ENCODE measurements at regions of chr14 and their contacts with region 1.

Region 1: DNA sequence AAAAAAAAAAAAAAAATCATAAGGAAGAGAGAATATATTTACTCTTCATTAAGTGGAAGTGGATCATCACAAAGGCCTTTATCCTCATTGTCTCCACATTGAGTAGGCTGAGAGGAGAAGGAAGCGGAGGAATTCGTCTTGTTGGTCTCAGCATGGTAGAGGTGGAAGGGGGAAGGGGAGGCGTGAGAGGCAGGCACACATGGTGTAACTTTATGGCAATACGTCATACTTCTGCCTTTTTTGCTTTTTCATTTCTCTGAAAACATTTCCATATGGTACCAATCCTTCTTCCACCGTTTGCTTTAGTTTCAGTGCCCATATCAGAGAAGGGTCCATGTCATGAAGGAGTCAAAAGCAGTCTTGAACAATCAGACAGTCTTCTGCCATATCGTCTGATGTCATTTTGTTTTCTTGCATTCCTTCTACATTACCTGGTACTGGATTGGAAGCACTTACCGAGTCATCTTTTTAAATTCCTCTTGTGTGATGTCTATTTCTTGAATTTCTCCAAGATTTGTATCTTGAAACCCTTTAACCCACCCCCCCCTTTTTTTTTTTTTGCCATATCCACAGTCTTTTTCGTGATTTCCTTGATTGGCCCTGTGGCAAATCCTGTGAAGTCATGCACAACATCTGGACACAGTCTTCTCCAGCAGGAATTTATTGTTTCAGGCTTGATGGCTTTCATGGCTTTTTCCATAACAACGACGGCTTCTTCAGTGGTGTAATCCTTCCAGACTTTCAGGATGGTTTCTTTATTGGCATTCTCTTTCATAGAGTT is 8.9 kb downstream of the FUT8 start:
- DNase-seq: peak; percentile 89
- H3K4me3 ChIP-seq: peak overlapping the region; percentile 58
- H3K27ac ChIP-seq: peak overlapping the region; percentile 90
- H3K4me1 ChIP-seq: peaks cover 19% of the 10 kb centered on the region
- H3K27me3 ChIP-seq: no peaks in the 10 kb centered on the region

Region 2: DNA sequence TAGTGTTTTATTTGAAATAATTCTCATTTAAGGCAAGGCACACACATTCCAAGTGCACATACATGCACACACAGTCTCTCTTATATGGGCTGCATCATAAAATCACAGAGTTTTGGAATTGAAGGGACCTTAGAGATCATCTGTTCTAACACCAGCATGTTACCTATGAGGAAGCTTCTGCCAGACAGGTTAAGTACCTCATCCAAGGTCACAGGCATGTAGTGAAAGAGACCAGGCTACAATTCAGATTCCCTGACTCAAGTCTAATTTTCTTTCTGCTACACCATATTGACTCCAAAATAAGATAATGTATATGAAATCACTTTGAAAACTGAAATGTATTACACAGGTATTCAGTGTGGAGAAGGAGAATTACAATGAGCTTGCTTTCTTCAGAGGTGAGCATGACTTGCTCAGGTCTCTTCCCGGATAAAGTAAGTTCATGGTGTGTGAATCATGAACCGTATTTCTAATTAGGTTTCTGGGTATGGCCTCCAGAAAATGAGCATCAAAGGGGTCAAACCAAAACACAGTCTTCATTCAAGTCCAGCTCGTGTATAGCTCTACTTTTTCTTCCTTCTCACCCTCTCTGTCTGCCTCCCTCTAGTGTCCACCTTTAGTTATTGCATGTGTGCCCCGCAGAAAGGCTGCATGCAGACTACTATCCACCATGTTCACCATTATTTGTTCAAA is 403.0 kb after region 1 on chr14:
- in situ Hi-C with region 1: loop called (anchors 10 kb)
- DNase-seq: peak; percentile 71
- H3K4me3 ChIP-seq: no peak overlapping the region
- H3K27ac ChIP-seq: no peak overlapping the region
- H3K4me1 ChIP-seq: no peaks in the 10 kb centered on the region
- H3K27me3 ChIP-seq: peaks cover 10% of the 10 kb centered on the region

Region 3: DNA sequence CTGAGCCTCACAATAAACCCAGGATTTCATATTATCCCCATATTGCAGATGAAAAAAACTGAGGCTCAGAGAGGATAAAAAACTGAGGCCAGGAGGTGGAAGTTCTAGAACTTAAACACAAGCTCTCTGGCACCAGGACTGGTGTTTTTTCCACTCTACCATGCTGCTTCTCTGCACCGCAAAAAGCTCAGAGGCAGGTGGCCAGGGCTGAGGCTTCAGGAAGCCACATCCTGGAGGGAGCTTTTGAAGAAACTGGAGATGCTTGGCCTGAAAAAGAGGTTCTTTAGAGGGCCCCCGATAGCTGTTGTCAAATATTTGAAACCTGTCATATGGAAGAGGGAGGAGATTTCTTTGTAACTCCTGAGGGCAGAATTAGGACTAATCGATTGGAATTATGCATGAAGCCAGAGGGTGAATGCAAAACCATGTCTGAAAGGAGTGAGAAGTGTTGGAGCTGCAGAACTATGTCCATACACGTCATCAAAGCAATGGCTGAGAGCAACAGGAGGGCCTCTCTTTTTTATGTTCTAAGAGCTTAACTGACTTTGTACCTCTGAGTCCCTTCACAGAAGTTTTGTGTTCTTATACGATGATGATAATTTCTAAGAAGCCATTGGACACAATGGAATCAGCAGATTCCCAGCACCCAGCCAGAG is 439.7 kb after region 1 on chr14:
- in situ Hi-C with region 1: no loop called
- DNase-seq: no peak
- H3K4me3 ChIP-seq: no peak overlapping the region
- H3K27ac ChIP-seq: no peak overlapping the region
- H3K4me1 ChIP-seq: peaks cover 3% of the 10 kb centered on the region
- H3K27me3 ChIP-seq: no peaks in the 10 kb centered on the region

Region 4: GRCh38 chr14:65958664-65959562 is 537.5 kb after region 1 on chr14:
- in situ Hi-C with region 1: loop called (anchors 10 kb)
- DNase-seq: peak; percentile 54
- H3K4me3 ChIP-seq: no peak overlapping the region
- H3K27ac ChIP-seq: no peak overlapping the region
- H3K4me1 ChIP-seq: no peaks in the 10 kb centered on the region
- H3K27me3 ChIP-seq: peaks cover 8% of the 10 kb centered on the region

Measured in GM23248 (cell line).